Esophagus squamous epithelium (tissue), 5 donors: ENCODE measurements at regions of chr17 and their contacts with region 1.

Region 1: DNA sequence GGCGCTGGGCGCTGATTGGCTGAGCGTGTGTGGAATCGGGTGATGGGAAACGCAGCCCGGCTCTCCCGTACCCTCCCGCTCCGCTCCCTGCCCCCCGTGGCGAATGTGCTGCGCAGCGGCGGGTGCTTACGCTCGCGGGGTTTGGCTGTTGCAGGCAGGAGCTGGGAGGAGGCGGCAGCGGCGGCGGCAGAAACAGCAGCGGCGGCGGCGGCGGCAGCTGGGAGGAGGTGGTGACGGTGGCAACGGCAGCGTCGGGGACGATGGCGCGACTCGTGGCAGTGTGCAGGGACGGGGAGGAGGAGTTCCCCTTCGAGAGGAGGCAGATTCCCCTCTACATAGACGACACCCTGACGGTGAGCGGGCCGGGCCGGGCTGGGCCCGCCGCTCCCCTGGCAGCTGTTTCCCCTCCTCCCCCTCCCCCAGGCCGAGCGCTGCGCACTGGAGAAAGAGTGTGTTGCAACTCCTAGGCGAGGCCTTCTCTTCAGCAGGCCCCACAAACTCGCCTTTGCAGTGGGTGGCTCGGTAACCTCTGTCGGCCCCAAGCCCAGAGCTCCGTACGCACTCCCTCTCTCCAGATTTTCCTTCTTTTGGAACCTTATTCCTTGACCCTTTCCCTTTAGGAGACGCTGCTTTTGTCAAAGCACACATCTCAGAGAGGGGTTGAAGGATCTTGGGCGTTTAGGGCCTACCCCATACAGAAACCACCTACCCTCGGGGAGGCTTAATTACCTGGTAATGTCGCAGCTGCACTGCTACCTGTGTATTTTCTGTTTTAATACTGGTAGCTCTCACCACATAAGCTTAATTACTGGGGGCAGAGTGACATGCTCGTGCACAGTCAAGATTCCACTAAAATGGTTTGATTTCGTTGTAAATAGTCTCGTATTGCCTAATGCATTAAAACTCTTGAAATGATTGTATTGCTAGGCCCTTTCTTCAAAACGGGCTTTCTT is 1.0 kb downstream of the GGNBP2 start:
- DNase-seq: peak; percentile 70
- H3K4me3 ChIP-seq: peak overlapping the region; percentile 77 to 100 (median 92)
- H3K27ac ChIP-seq: peak overlapping the region; percentile 96 to 100 (median 100)
- H3K4me1 ChIP-seq: peaks cover 9 to 71% (median 41%) of the 10 kb centered on the region in 3 donors
- H3K27me3 ChIP-seq: no peaks in the 10 kb centered on the region
- CTCF ChIP-seq: peak in 1 of 6 experiments; percentile 14
- POLR2A ChIP-seq: peak in 3 of 4 donors; percentile 26 to 90 (median 88)

Region 2: GRCh38 chr17:36475346-36475970 is 70.3 kb before region 1 on chr17:
- intact Hi-C with region 1: no loop called
- DNase-seq: no peak
- H3K4me3 ChIP-seq: no peak overlapping the region
- H3K27ac ChIP-seq: no peak overlapping the region
- H3K4me1 ChIP-seq: no peaks in the 10 kb centered on the region
- H3K27me3 ChIP-seq: peaks cover 0 to 47% (median 0%) of the 10 kb centered on the region in 4 donors
- CTCF ChIP-seq: no peak
- POLR2A ChIP-seq: no peak

Region 3: DNA sequence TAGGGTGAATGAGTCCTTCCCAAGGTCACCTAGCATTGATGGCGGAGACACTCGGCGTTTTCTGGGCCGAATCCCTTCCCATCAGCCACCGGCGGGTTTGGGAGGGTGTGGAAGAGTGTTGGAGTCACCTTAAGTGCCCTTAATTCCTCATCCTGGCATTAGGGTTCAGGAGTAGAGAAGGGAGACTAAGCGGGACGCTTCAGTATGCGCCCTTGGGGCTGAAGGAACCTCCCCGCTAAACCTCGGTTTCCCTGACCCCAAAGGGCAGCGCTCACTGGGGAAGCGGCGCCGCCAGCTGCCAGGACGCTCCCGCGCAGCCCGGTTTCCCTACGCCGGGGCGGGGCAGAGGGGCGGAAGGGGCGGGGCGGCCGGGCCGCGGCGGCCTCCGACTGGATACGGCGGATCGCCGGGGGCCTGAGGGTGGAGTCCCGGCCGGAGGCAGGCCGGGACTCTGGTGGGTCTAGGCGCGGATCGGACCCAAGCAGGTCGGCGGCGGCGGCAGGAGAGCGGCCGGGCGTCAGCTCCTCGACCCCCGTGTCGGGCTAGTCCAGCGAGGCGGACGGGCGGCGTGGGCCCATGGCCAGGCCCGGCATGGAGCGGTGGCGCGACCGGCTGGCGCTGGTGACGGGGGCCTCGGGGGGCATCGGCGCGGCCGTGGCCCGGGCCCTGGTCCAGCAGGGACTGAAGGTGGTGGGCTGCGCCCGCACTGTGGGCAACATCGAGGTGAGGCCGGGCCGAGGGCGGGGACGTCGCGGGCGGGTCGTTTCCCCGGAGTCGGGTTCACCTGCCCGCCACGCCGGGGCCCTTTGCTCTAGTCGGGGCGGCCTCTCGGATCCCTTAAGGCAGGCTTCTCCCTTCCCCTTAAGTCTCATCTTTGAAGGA is 45.9 kb after region 1 on chr17 and contains the start of gene DHRS11:
- intact Hi-C with region 1: loop called (anchors 5 kb)
- DNase-seq: no peak
- H3K4me3 ChIP-seq: peak within 1 kb of the TSS; percentile 70 to 100 (median 86)
- H3K27ac ChIP-seq: peak within 1 kb of the TSS; percentile 80 to 90 (median 82)
- H3K4me1 ChIP-seq: peaks cover 10 to 36% (median 10%) of the 10 kb centered on the region in 3 donors
- H3K27me3 ChIP-seq: no peaks in the 10 kb centered on the region
- CTCF ChIP-seq: no peak
- POLR2A ChIP-seq: peak in 1 of 4 donors; percentile 19
- total RNA-seq, gene DHRS11: 9.0 to 11.1 (median 10.2) TPM